ENCODE measurements at regions of chr14 and their contacts with region 1.

Region 1: DNA sequence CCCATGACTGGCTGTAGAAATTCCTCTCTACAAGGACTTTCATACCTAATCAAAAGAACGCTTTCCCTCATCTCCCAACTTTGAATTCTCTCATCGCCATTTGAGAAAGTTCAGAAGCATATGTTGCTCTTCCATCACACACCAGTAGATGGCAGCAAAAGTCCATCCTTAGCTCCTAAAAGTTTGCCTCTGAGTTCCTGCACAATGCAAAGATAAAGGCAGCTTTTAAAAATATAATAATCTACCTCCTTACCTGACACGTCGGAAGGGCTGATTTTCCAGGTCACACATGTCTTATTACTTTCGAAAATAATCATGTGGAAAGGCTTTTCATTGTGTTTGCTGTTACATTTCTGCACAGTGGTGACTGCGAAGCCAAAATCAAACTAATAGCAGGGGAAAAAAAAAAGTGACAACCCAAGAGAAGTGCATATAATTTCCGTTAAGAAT is 456.7 kb upstream of the SEL1L start:
- DNase-seq: peak; percentile 41 to 70 (median 58)
- H3K4me3 ChIP-seq: no peak overlapping the region
- H3K27ac ChIP-seq: no peak overlapping the region
- H3K4me1 ChIP-seq: peaks cover 0 to 9% (median 1%) of the 10 kb centered on the region in 4 experiments
- H3K27me3 ChIP-seq: no peaks in the 10 kb centered on the region

Region 2: GRCh38 chr14:81890020-81890419 is 100.3 kb before region 1 on chr14:
- CTCF ChIA-PET with region 1: no interaction called
- POLR2A ChIA-PET with region 1: no interaction called
- DNase-seq: no peak
- H3K4me3 ChIP-seq: no peak overlapping the region
- H3K27ac ChIP-seq: no peak overlapping the region
- H3K4me1 ChIP-seq: no peaks in the 10 kb centered on the region
- H3K27me3 ChIP-seq: no peaks in the 10 kb centered on the region

Region 3: GRCh38 chr14:82003426-82003825 is 13.1 kb after region 1 on chr14:
- CTCF ChIA-PET with region 1: interaction called, 10 read pairs
- POLR2A ChIA-PET with region 1: no interaction called
- DNase-seq: no peak
- H3K4me3 ChIP-seq: no peak overlapping the region
- H3K27ac ChIP-seq: no peak overlapping the region
- H3K4me1 ChIP-seq: no peaks in the 10 kb centered on the region
- H3K27me3 ChIP-seq: no peaks in the 10 kb centered on the region

Region 4: DNA sequence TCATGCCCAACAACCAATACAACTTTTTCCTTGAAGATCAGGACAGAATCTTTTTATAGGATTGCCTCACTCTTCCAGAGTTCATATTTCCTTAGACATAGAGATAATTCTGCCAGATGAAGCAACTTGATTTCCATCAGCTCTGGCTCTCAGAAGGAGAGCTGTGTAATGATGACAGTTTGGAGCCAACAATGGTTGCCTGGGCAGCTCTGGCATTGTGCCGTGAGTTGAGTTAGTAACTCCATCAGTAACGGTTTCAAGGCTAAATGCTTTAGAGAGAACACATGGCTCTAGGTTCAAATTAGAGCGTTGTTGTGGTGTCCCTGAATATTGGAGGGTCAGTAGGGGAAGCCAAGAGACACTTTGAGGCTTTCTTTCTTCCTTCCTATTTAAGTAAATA is 45.1 kb after region 1 on chr14:
- CTCF ChIA-PET with region 1: no interaction called
- POLR2A ChIA-PET with region 1: no interaction called
- DNase-seq: no peak
- H3K4me3 ChIP-seq: no peak overlapping the region
- H3K27ac ChIP-seq: no peak overlapping the region
- H3K4me1 ChIP-seq: no peaks in the 10 kb centered on the region
- H3K27me3 ChIP-seq: no peaks in the 10 kb centered on the region

Measured in common myeloid progenitor, CD34-positive (primary cell).